ENCODE measurements at regions of chr16 and their contacts with region 1.

Region 1: GRCh38 chr16:29700253-29700987 is 21.4 kb downstream of the QPRT start:
- DNase-seq: no peak
- H3K4me3 ChIP-seq: no peak overlapping the region
- H3K27ac ChIP-seq: no peak overlapping the region
- H3K4me1 ChIP-seq: peaks cover 0 to 5% (median 4%) of the 10 kb centered on the region in 4 donors
- H3K27me3 ChIP-seq: no peaks in the 10 kb centered on the region
- CTCF ChIP-seq: peak; percentile 89 to 96 (median 92)
- EP300 ChIP-seq: no peak
- POLR2A ChIP-seq: no peak

Region 2: GRCh38 chr16:29720699-29721098 is 20.3 kb after region 1 on chr16:
- intact Hi-C with region 1: loop called (anchors 2 kb)
- DNase-seq: no peak
- H3K4me3 ChIP-seq: no peak overlapping the region
- H3K27ac ChIP-seq: no peak overlapping the region
- H3K4me1 ChIP-seq: no peaks in the 10 kb centered on the region
- H3K27me3 ChIP-seq: peaks cover 0 to 3% (median 0%) of the 10 kb centered on the region in 4 donors
- CTCF ChIP-seq: no peak
- EP300 ChIP-seq: no peak
- POLR2A ChIP-seq: no peak

Region 3: GRCh38 chr16:29784901-29785500 is 84.6 kb after region 1 on chr16:
- intact Hi-C with region 1: loop called (anchors 10 kb)
- DNase-seq: no peak
- H3K4me3 ChIP-seq: peak overlapping the region; percentile 27 to 52 (median 32)
- H3K27ac ChIP-seq: no peak overlapping the region
- H3K4me1 ChIP-seq: peaks cover 12 to 21% (median 17%) of the 10 kb centered on the region in 4 donors
- H3K27me3 ChIP-seq: peaks cover 0 to 6% (median 0%) of the 10 kb centered on the region in 4 donors
- CTCF ChIP-seq: peak; percentile 66 to 88 (median 66)
- EP300 ChIP-seq: no peak
- POLR2A ChIP-seq: no peak

Region 4: DNA sequence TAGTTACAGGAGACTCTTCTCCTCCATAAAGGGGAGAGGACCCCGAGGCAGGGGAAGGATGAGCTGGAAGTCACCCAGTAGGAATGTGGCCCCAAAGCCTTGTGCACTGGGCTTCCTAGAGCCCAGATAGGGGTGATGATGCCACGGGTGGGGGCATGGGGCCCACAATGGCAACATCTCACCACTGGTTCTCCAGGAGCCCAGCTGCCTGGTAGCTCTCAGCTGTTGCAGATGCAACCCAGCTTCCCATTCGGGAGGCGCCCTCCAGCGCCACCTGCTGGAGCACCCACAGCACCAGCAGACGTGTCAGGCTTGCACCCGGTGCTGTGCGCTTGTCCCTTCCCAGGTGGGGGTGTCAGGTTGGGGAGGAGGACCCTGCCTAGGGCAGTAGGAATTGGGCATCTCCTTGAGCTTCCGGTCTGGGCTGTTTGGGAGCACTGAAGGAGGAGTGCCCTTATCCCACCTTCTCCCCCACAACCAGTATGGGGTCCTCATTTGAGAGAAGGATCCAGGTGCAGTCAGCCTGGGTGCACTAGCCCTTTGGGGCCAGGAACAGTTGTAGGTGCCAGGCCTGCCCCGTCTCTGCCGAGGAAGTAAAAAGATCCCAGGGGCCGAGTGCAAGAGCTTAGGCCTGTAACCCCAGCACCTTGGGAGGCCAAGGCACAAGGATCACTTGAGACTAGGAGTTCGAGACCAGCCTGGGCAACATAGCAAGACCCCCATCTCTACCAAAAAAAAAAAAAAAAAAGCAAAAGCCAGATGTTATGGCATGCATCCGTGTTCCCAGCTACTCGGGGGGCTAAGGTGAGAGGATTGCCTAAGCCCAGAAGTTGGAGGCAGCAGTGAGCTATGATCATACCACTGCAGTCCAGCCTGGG is 148.2 kb after region 1 on chr16:
- intact Hi-C with region 1: loop called (anchors 2 kb)
- DNase-seq: no peak
- H3K4me3 ChIP-seq: no peak overlapping the region
- H3K27ac ChIP-seq: peak overlapping the region in 3 of 4 donors; percentile 14 to 60 (median 40)
- H3K4me1 ChIP-seq: peaks cover 0 to 42% (median 24%) of the 10 kb centered on the region in 4 donors
- H3K27me3 ChIP-seq: no peaks in the 10 kb centered on the region
- CTCF ChIP-seq: peak in 2 of 3 experiments; percentile 79
- EP300 ChIP-seq: no peak
- POLR2A ChIP-seq: no peak

Region 5: DNA sequence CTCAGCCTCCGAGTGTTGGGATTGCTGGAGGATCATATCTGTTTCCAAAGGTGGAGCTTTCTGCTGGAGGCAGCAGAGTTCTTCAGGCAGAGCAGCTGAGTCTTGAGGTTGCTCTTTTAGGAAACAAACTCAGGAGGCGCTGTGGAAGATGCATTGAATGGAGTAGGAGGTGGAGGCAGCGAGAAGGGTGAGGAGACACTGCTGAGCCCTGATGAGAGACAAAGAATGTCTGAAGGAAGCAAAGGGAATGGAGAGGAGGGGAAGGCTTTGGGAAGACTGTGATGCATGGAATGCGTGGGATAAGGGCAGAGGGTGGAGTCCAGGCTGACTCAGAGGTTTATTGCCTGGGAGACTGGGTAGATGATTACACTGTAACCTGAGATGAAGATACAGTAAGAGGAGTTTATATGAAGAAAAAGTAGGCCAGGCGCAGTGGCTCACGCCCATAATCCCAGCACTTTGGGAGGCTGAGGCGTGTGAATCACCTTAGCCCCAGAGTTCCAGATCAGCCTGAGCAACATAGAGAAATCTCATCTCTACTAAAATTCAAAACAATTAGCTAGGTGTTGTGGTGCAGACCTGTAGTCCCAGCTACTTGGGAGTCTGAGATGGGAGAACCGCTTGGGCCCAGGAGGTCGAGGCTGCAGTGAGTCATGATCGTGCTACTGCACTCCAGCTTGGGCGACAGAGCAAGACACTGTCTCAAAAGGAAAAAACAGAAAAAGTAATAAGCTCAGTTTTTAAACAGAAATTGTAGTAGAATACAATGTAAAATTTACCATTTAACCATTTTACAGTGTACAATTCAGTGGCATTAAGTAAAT is 243.6 kb after region 1 on chr16:
- intact Hi-C with region 1: no loop called
- DNase-seq: no peak
- H3K4me3 ChIP-seq: no peak overlapping the region
- H3K27ac ChIP-seq: peak overlapping the region; percentile 50 to 78 (median 64)
- H3K4me1 ChIP-seq: peaks cover 0 to 14% (median 11%) of the 10 kb centered on the region in 4 donors
- H3K27me3 ChIP-seq: no peaks in the 10 kb centered on the region
- CTCF ChIP-seq: peak in 2 of 3 experiments; percentile 12 to 17
- EP300 ChIP-seq: no peak
- POLR2A ChIP-seq: no peak

Region 6: DNA sequence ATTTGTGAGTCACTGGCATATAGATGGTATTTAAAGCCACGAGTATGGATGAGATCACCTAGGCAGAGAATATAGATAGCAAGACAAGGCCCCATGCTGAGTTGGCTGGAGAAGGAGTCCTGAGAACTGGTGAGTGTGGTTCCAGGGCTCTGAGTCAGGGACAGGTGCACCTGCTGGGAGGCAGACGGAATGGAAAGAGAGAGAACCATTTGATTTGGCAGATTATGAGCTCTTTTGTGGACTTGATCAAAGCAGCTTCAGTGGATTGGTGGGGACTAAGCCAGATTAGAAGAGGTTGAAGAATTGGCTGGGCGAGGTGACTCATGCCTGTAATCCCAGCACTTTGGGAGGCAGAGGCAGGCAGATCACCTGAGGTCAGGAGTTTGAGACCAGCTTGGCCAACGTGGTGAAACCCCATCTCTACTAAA is 318.3 kb after region 1 on chr16:
- intact Hi-C with region 1: loop called (anchors 2 kb)
- DNase-seq: no peak
- H3K4me3 ChIP-seq: no peak overlapping the region
- H3K27ac ChIP-seq: no peak overlapping the region
- H3K4me1 ChIP-seq: peaks cover 6 to 14% (median 13%) of the 10 kb centered on the region in 4 donors
- H3K27me3 ChIP-seq: no peaks in the 10 kb centered on the region
- CTCF ChIP-seq: no peak
- EP300 ChIP-seq: no peak
- POLR2A ChIP-seq: no peak

Region 7: DNA sequence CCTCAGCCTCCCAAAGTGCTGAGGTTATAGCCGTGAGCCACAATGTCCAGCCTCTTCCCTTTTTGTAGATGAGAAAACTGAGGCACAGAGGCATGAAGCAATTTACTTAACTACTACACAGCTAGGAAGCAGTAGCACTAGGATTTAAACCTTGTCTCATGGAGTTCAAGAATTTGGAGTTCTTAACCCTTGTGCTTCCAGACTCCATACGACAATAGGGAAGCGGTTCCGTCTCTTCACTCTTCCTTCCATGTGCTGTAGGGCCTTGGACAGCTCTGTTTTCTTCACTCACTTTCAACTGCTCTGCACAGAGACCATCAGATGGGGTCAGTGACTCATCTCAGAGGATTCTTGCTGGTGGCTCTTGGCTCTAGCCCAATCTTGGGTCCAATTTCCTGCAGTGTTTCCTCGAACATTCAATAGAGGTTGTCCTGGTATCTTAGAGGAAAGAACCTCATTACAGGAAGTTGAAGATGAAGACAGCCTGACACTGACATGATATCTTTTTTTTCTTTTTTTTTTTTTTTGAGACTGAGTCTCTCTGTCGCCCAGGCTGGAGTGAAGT is 791.4 kb after region 1 on chr16:
- intact Hi-C with region 1: no loop called
- DNase-seq: no peak
- H3K4me3 ChIP-seq: no peak overlapping the region
- H3K27ac ChIP-seq: no peak overlapping the region
- H3K4me1 ChIP-seq: no peaks in the 10 kb centered on the region
- H3K27me3 ChIP-seq: peaks cover 0 to 29% (median 0%) of the 10 kb centered on the region in 4 donors
- CTCF ChIP-seq: no peak
- EP300 ChIP-seq: no peak
- POLR2A ChIP-seq: no peak